IMR-90 (cell line): ENCODE measurements at regions of chr5 and their contacts with region 1.

Region 1: DNA sequence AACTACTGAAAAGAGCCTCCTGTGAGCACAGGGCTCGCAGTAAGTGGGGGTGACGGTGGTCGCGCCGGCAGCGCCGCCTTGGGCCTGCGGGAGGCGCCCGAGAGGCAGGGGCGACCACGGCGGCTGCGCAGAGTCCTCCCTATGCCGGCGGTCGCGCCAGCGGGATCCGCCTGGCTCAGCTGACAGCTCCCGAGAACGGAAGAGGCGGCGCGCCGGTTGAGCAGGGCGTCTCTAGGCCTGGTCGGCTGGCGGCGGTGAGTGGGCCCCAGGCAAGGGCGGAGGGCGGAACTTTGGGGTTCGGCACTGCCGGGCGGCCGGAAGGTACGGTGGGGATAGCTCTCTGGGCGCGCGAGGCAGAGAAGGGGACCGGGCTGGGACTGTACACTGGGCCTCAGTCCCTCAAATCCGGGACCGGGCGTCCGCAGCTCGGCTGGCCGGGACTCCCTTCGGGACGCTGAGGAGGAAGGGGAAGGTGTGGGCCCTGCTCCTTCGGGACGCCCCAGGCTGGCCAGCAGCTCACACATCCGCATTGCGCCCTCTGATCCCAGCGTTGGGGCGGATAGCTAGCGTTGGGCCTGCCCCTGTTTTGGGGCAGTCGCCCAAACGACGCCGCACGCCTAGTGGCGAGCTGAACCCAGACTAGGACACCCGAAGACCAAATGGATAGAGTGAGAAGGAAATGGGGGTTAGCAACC is at the start of gene RNF14:
- DNase-seq: peak; percentile 91
- ATAC-seq: peak; percentile 98
- H3K4me3 ChIP-seq: peak within 1 kb of the TSS; percentile 62
- H3K27ac ChIP-seq: peak within 1 kb of the TSS; percentile 82
- H3K4me1 ChIP-seq: peaks cover 8% of the 10 kb centered on the region; the same call in 1 of the 2 replicates
- H3K27me3 ChIP-seq: no peaks in the 10 kb centered on the region
- CTCF ChIP-seq: peak; percentile 92
- POLR2A ChIP-seq: peak; percentile 94
- RAD21 ChIP-seq: no peak; the same call in 1 of the 2 replicates
- total RNA-seq, gene RNF14: 78.6 and 106 TPM in 2 replicates

Region 2: GRCh38 chr5:141512390-141512910 is 456.6 kb before region 1 on chr5:
- CTCF ChIA-PET with region 1: no interaction called
- POLR2A ChIA-PET with region 1: no interaction called
- dilution Hi-C with region 1: no loop called
- in situ Hi-C with region 1: no loop called
- intact Hi-C with region 1: no loop called
- DNase-seq: peak; percentile 54
- ATAC-seq: no peak
- H3K4me3 ChIP-seq: no peak overlapping the region
- H3K27ac ChIP-seq: peak overlapping the region; percentile 84
- H3K4me1 ChIP-seq: peaks cover 57% of the 10 kb centered on the region
- H3K27me3 ChIP-seq: no peaks in the 10 kb centered on the region
- CTCF ChIP-seq: peak; percentile 62
- POLR2A ChIP-seq: no peak
- RAD21 ChIP-seq: peak; percentile 44

Region 3: DNA sequence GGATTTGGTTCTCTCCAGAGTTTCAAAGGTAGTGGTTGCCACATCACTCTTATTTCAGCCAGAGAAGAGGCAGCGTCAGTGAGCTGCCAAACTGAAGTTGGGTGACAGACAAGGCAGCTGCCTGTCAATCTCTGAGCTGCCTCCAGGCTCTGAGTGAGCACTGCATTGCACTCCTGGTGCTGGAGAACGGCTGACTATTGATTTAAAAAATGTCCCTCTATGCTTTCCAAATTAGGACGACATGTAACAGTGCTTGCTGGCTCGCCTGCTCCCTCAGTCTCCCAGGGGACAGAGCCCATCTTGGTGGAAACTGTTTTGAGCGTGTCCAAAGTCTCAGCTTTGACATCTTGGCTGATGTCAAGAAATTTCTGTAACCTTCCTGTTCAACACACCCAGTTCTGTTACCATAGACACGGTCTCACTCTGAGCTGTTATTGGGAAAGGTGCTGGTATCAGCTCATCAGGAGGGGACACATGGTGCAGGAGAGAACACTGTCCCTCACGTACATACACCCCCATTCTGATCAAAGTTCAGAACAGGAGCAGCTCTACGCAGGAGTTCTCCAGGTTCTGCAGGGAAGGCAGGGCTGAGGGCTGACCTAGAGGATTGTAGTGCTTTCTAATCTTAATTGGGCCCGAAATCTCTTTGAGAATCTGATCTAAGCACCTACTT is 26.7 kb before region 1 on chr5:
- CTCF ChIA-PET with region 1: no interaction called
- POLR2A ChIA-PET with region 1: interaction called, 11 read pairs
- dilution Hi-C with region 1: no loop called
- in situ Hi-C with region 1: no loop called
- intact Hi-C with region 1: no loop called
- DNase-seq: no peak
- ATAC-seq: no peak
- H3K4me3 ChIP-seq: no peak overlapping the region
- H3K27ac ChIP-seq: no peak overlapping the region
- H3K4me1 ChIP-seq: peaks cover 2% of the 10 kb centered on the region; the same call in 1 of the 2 replicates
- H3K27me3 ChIP-seq: peaks cover 3% of the 10 kb centered on the region; the same call in 1 of the 2 replicates
- CTCF ChIP-seq: no peak
- POLR2A ChIP-seq: no peak
- RAD21 ChIP-seq: no peak

Region 4: DNA sequence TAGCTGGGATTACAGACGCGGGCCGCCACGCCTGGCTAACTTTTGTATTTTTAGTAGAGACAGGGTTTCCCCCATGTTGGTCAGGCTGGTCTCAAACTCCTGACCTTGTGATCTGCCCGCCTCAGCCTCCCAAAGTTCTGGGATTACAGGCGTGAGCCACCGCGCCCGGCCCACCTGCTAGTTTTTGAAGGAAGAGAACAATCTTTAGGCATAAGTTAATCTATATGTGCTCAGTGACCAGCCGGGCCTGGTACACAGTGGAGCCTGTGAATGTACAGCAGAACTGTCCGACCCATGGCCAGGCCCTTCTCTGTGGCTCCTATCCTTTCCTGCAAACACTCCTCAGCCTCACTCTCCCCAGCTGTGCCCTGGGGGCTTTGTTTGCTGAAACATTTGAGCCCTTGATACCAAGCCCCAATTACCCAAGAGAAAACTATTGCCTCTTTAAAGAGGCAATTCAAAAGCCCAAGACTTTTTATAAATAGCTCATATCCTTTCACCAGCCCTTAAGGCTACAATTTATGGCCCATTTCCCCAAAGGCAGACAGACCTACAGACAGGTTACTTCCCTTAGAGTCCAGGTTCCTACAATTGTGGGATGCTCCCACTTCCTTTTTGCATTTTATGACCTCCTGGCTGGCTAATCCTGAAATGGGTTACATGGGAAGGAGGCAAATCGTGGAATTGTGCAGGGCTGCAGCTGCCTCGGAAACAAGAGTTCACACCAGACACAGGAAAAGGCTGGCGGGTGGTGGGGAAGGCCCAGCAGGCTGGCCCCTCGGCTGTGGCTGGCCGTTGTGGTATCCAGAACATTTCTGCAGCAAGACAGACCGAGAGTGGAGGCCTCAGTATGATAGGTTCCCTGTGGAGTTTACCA is 318.3 kb after region 1 on chr5:
- CTCF ChIA-PET with region 1: no interaction called
- POLR2A ChIA-PET with region 1: no interaction called
- dilution Hi-C with region 1: no loop called
- in situ Hi-C with region 1: no loop called
- intact Hi-C with region 1: no loop called
- DNase-seq: no peak
- ATAC-seq: no peak
- H3K4me3 ChIP-seq: no peak overlapping the region
- H3K27ac ChIP-seq: no peak overlapping the region
- H3K4me1 ChIP-seq: 0 out of 2 replicates have a peak, but pooled peaks cover 2% of the 10 kb centered on the region
- H3K27me3 ChIP-seq: no peaks in the 10 kb centered on the region
- CTCF ChIP-seq: no peak
- POLR2A ChIP-seq: no peak
- RAD21 ChIP-seq: no peak